Calu3 (cell line): ENCODE measurements at regions of chr18 and their contacts with region 1.

Region 1: DNA sequence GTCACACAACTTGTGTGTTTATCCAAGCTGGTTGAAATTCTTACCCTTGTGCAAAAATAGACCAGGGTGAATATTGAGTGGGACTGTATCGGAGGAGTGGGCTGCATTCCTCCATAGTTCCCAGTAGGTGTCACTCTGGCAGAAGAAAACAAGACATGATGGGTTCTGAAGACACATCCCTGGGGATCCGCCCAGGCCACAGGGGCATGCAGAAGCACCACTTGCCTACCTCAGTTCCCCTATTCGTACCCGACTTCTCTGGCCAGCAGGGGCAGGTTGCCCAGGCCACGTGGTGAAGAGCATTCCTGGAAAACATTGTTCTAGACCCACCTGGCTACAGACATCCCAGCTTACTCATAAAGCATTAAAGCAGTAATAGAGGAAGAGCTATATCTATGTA is 168.2 kb downstream of the FAM210A start:
- DNase-seq: peak; percentile 23
- H3K4me3 Mint-ChIP-seq: no peak overlapping the region
- H3K27ac Mint-ChIP-seq: no peak overlapping the region
- H3K4me1 Mint-ChIP-seq: no peaks in the 10 kb centered on the region
- H3K27me3 Mint-ChIP-seq: peaks cover 53% of the 10 kb centered on the region
- CTCF ChIP-seq: peak; percentile 45

Region 2: GRCh38 chr18:13416208-13416607 is 141.9 kb before region 1 on chr18:
- CTCF ChIA-PET with region 1: no interaction called
- intact Hi-C with region 1: no loop called
- DNase-seq: no peak
- H3K4me3 Mint-ChIP-seq: no peak overlapping the region
- H3K27ac Mint-ChIP-seq: no peak overlapping the region
- H3K4me1 Mint-ChIP-seq: no peaks in the 10 kb centered on the region
- H3K27me3 Mint-ChIP-seq: peaks cover 13% of the 10 kb centered on the region
- CTCF ChIP-seq: no peak

Region 3: GRCh38 chr18:13494871-13495445 is 63.2 kb before region 1 on chr18:
- CTCF ChIA-PET with region 1: no interaction called
- intact Hi-C with region 1: no loop called
- DNase-seq: no peak
- H3K4me3 Mint-ChIP-seq: no peak overlapping the region
- H3K27ac Mint-ChIP-seq: no peak overlapping the region
- H3K4me1 Mint-ChIP-seq: no peaks in the 10 kb centered on the region
- H3K27me3 Mint-ChIP-seq: peaks cover 43% of the 10 kb centered on the region
- CTCF ChIP-seq: no peak

Region 4: DNA sequence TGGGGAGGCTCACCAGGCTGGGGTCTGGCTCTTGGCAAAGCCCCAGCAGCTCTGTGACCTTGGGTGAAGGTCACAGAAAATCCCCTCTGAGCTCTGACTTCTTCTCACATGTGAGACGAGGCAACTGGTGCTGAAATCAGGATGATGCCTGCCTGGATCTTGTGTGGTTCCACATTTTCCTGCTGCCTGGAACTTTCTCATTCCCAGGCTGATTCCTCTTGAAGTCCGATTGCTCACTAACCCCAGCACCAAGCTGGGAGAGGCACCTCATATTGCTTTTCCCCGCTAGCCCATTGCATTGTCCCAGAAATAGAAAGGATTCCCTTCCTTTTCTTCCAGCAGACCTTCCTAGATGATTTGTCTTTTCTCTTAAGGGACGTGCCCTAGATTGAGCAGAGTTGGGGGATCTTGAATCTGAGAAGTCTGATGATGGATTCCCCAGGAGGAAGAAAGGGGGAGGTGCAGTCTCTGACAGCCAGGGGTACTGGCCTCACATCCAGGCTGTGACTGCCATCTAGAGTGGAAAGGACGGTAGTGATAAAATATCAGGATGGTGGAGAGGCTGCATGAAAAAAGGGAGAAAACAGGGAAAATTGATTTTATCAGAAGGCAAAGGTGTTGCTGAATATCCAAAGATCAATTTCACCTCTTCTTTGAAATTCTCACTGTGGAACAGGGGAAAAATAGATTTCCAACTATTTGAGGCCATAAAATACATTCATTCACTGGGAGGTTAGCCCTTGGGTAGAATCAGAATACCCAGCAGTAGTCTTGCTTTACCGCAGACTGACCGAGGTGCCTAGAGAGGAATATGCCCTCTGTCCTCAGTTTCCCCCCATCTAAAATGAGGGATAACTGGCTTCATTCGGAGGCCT is 72.0 kb after region 1 on chr18:
- CTCF ChIA-PET with region 1: no interaction called
- intact Hi-C with region 1: loop called (anchors 1 kb)
- DNase-seq: peak; percentile 54
- H3K4me3 Mint-ChIP-seq: no peak overlapping the region
- H3K27ac Mint-ChIP-seq: no peak overlapping the region
- H3K4me1 Mint-ChIP-seq: no peaks in the 10 kb centered on the region
- H3K27me3 Mint-ChIP-seq: peaks cover 26% of the 10 kb centered on the region
- CTCF ChIP-seq: peak; percentile 52

Region 5: DNA sequence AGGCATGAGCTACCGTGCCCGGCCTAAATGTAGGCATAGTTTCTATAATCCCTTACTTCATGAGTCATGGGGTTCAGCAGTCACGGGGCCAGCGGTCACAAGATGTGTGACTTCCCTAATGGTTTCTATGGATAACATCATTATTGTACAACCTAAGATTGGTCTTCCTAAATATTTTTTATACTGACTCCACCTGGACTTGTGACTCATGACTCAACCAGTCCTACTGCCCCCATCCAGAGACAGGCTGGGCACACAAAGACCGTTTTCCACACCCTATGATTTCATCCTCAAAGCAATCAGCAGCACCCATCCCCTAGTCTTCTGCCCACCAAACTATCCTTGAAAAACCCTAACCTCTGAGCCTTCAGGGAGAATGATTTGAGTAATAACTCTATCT is 152.3 kb after region 1 on chr18:
- CTCF ChIA-PET with region 1: no interaction called
- intact Hi-C with region 1: loop called (anchors 10 kb)
- DNase-seq: peak; percentile 75
- H3K4me3 Mint-ChIP-seq: peak overlapping the region; percentile 36
- H3K27ac Mint-ChIP-seq: peak overlapping the region; percentile 93
- H3K4me1 Mint-ChIP-seq: peaks cover 48% of the 10 kb centered on the region
- H3K27me3 Mint-ChIP-seq: no peaks in the 10 kb centered on the region
- CTCF ChIP-seq: no peak

Region 6: GRCh38 chr18:13800505-13801259 is 242.6 kb after region 1 on chr18:
- CTCF ChIA-PET with region 1: no interaction called
- intact Hi-C with region 1: loop called (anchors 1 kb)
- DNase-seq: peak; percentile 90
- H3K4me3 Mint-ChIP-seq: peak overlapping the region; percentile 71
- H3K27ac Mint-ChIP-seq: peak overlapping the region; percentile 50
- H3K4me1 Mint-ChIP-seq: peaks cover 40% of the 10 kb centered on the region
- H3K27me3 Mint-ChIP-seq: no peaks in the 10 kb centered on the region
- CTCF ChIP-seq: peak; percentile 47